Naive thymus-derived CD8-positive, alpha-beta T cell (primary cell): ENCODE measurements at regions of chr1 and their contacts with region 1.

Region 1: DNA sequence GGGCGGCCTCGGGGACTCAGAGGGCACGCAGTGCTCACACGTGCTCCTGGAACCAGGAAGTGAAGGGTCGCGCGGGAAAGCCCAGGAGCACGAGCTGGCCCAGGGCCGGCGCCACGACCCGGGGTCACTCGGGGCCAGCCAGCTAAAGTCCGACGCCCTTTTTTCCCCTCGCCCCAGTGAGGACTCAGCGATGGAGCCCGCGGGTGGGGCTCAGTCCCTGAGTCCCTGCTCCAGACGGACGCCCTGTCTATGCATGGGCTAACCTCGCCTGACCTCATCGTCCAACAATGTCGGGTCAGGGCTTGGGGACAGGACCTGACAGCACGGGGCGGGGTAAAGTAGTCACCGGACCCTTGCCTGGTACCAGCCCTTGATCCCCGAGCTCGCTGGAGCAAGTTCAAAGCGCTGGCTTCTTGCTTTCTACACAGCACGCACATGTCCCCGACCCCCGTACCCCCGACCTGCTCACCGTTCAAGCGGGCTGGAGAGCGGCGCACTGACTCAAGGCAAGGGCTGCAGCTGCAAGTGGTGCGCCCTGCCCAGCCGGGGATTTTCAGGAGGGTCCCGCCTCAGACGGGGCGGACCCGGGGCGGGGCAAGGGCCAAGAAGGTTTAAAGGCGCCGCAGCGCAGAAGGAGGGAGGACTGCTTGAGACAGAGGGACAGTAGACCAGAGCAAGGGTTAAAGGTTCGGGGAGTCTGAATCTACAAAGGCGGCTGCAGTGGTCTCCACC is at the start of gene TAGLN2:
- DNase-seq: peak; percentile 83 to 94 (median 86)
- ATAC-seq: peak; percentile 49 to 52
- H3K4me3 Mint-ChIP-seq: peak within 1 kb of the TSS; percentile 85 to 100 (median 96)
- H3K27ac Mint-ChIP-seq: peak within 1 kb of the TSS; percentile 98 to 100 (median 100)
- H3K4me1 Mint-ChIP-seq: peaks cover 42 to 63% (median 51%) of the 10 kb centered on the region in 4 donors
- H3K27me3 Mint-ChIP-seq: peaks cover 0 to 5% (median 0%) of the 10 kb centered on the region in 5 donors
- polyA plus RNA-seq, gene TAGLN2: 477 to 825 (median 609) TPM

Region 2: GRCh38 chr1:159908031-159908940 is 16.9 kb before region 1 on chr1:
- POLR2A ChIA-PET with region 1: interaction called, 20 read pairs
- DNase-seq: no peak
- ATAC-seq: no peak
- H3K4me3 Mint-ChIP-seq: no peak overlapping the region
- H3K27ac Mint-ChIP-seq: peak overlapping the region; percentile 56 to 94 (median 76)
- H3K4me1 Mint-ChIP-seq: peaks cover 30 to 56% (median 54%) of the 10 kb centered on the region in 4 donors
- H3K27me3 Mint-ChIP-seq: no peaks in the 10 kb centered on the region

Region 3: GRCh38 chr1:159945483-159946241 is 20.5 kb after region 1 on chr1 and contains the start of gene IGSF9:
- POLR2A ChIA-PET with region 1: interaction called, 13 read pairs
- DNase-seq: peak; percentile 73 to 94 (median 88)
- ATAC-seq: peak; percentile 98 to 99
- H3K4me3 Mint-ChIP-seq: peak within 1 kb of the TSS; percentile 63 to 88 (median 75)
- H3K27ac Mint-ChIP-seq: peak within 1 kb of the TSS in 5 of 10 donors; percentile 20 to 85 (median 71)
- H3K4me1 Mint-ChIP-seq: peaks cover 8 to 15% (median 11%) of the 10 kb centered on the region in 4 donors
- H3K27me3 Mint-ChIP-seq: peaks cover 16 to 54% (median 25%) of the 10 kb centered on the region in 5 donors
- polyA plus RNA-seq, gene IGSF9: not detected

Region 4: DNA sequence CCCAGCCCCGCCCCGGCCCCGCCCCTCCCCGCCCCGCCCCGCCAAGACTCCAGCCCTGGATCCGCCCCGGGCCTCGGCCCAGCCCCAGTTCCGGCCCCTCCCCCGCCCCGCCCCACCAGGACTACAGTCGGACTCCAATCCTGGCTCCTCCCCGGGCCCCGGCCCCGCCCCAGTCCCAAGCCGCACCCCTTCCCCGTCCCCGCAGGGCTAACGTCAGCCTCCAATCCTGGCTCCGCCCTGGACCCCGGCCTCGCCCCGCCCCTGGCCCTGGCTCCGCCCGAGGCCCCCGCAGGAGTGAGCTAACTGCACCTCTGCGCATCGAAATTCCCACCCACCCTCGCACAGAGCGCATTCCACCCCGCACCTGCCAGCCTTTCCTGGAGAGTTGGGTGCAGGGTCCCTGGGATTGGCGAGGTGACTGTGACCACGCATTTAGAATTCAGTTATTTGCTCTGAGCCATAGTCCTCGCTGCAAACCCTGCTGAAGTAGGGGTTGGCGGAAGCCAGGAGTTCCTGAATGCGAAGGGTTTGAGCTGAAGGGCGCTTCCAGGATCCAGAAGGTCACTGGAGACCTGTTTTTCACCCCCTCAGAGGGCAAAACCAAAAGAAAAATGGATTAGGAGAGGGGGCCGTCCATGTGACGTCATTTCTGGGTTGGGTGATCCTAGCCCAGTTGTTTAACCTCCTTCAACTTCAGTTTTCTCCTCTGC is 173.9 kb after region 1 on chr1:
- POLR2A ChIA-PET with region 1: interaction called, 11 read pairs
- DNase-seq: peak; percentile 94 to 99 (median 98)
- ATAC-seq: peak; percentile 78 to 79
- H3K4me3 Mint-ChIP-seq: peak overlapping the region; percentile 74 to 97 (median 84)
- H3K27ac Mint-ChIP-seq: peak overlapping the region; percentile 88 to 100 (median 99)
- H3K4me1 Mint-ChIP-seq: peaks cover 39 to 86% (median 81%) of the 10 kb centered on the region in 4 donors
- H3K27me3 Mint-ChIP-seq: no peaks in the 10 kb centered on the region